Thyroid gland (tissue), 4 donors: ENCODE measurements at regions of chr11 and their contacts with region 1.

Region 1: GRCh38 chr11:27184458-27185312 is 144.1 kb downstream of the BBOX1 start:
- DNase-seq: no peak
- H3K4me3 ChIP-seq: no peak overlapping the region
- H3K27ac ChIP-seq: no peak overlapping the region
- H3K4me1 ChIP-seq: no peaks in the 10 kb centered on the region
- H3K27me3 ChIP-seq: no peaks in the 10 kb centered on the region
- CTCF ChIP-seq: no peak
- POLR2A ChIP-seq: no peak

Region 2: GRCh38 chr11:27485930-27486773 is 301.5 kb after region 1 on chr11:
- intact Hi-C with region 1: loop called (anchors 5 kb)
- DNase-seq: peak in 1 of 2 donors; percentile 17
- H3K4me3 ChIP-seq: no peak overlapping the region
- H3K27ac ChIP-seq: no peak overlapping the region
- H3K4me1 ChIP-seq: no peaks in the 10 kb centered on the region
- H3K27me3 ChIP-seq: no peaks in the 10 kb centered on the region
- CTCF ChIP-seq: peak; percentile 71 to 99 (median 90)
- POLR2A ChIP-seq: no peak